Activated CD8-positive, alpha-beta memory T cell treated with anti-CD3 and anti-CD28 coated beads, Interleukin-2, amount 10 ng/mL, durations not matched to agents 7 days and 5 days (primary cell): ENCODE measurements at regions of chr4 and their contacts with region 1.

Region 1: GRCh38 chr4:15956179-15956850 is 6.7 kb downstream of the FGFBP2 start:
- DNase-seq: peak; percentile 89
- ATAC-seq: peak; percentile 95
- H3K4me3 Mint-ChIP-seq: no peak overlapping the region
- H3K27ac Mint-ChIP-seq: no peak overlapping the region
- H3K4me1 Mint-ChIP-seq: peaks cover 1% of the 10 kb centered on the region
- H3K27me3 Mint-ChIP-seq: peaks cover 29% of the 10 kb centered on the region

Region 2: GRCh38 chr4:15479089-15479912 is 477.0 kb before region 1 on chr4:
- CTCF ChIA-PET with region 1: interaction called, 10 read pairs
- DNase-seq: no peak
- ATAC-seq: no peak
- H3K4me3 Mint-ChIP-seq: no peak overlapping the region
- H3K27ac Mint-ChIP-seq: no peak overlapping the region
- H3K4me1 Mint-ChIP-seq: no peaks in the 10 kb centered on the region
- H3K27me3 Mint-ChIP-seq: no peaks in the 10 kb centered on the region

Region 3: GRCh38 chr4:15729910-15730533 is 226.3 kb before region 1 on chr4:
- CTCF ChIA-PET with region 1: interaction called, 15 read pairs
- DNase-seq: peak; percentile 53
- ATAC-seq: peak; percentile 70
- H3K4me3 Mint-ChIP-seq: no peak overlapping the region
- H3K27ac Mint-ChIP-seq: no peak overlapping the region
- H3K4me1 Mint-ChIP-seq: peaks cover 8% of the 10 kb centered on the region
- H3K27me3 Mint-ChIP-seq: peaks cover 22% of the 10 kb centered on the region

Region 4: GRCh38 chr4:15805583-15806517 is 150.5 kb before region 1 on chr4:
- CTCF ChIA-PET with region 1: interaction called, 34 read pairs
- DNase-seq: no peak
- ATAC-seq: no peak
- H3K4me3 Mint-ChIP-seq: no peak overlapping the region
- H3K27ac Mint-ChIP-seq: no peak overlapping the region
- H3K4me1 Mint-ChIP-seq: peaks cover 51% of the 10 kb centered on the region
- H3K27me3 Mint-ChIP-seq: no peaks in the 10 kb centered on the region

Region 5: GRCh38 chr4:16001484-16001858 is 45.2 kb after region 1 on chr4:
- CTCF ChIA-PET with region 1: interaction called, 59 read pairs
- DNase-seq: peak; percentile 69
- ATAC-seq: peak; percentile 94
- H3K4me3 Mint-ChIP-seq: no peak overlapping the region
- H3K27ac Mint-ChIP-seq: no peak overlapping the region
- H3K4me1 Mint-ChIP-seq: no peaks in the 10 kb centered on the region
- H3K27me3 Mint-ChIP-seq: peaks cover 20% of the 10 kb centered on the region

Region 6: DNA sequence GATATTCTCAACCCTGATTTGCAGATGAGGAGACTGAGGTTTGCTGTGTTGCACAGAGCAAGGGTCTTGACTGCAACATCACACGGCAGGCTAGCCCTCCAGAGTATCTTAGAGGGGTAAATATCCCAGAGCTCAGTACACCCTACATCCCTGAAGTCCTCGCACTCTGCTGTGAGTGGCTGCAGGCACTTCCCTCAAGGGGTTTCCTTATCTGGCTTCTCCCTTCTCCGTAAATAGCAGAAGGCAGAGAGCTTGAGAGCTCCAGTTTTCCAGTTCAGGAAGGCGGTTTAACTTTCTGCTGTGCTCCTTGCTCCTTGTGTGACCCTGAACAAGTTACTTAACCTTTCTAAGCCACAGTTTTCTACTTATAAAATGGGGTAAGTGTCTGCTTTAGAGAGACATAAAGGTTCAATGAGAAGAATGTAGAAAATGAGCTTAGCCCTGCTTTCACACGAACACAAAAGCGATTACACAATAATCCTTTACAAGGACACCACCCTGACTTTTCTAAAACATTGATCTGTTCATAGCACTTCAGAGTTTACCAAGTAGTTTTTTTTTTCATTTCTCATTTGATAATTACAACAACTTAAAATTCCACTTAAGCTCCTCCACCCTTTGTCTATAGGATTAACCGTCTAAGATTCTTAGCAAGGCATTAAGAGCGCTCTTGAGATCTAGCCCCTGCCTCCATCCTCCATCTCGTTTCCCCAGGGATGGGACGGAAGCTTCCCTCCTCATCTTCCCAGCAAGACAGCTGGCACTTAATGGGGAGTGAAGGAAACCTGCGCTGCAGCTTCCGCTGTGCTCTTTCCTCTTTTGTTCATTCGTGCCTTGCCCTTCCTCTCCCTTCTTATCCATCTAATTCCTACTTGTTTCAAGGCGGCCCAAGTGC is 201.5 kb after region 1 on chr4:
- CTCF ChIA-PET with region 1: no interaction called
- DNase-seq: no peak
- ATAC-seq: no peak
- H3K4me3 Mint-ChIP-seq: no peak overlapping the region
- H3K27ac Mint-ChIP-seq: no peak overlapping the region
- H3K4me1 Mint-ChIP-seq: no peaks in the 10 kb centered on the region
- H3K27me3 Mint-ChIP-seq: no peaks in the 10 kb centered on the region